SK-N-SH (cell line): ENCODE measurements at regions of chr11 and their contacts with region 1.

Region 1: GRCh38 chr11:120801801-120802689 is 221.9 kb upstream of the TBCEL start:
- DNase-seq: peak; percentile 83
- H3K4me3 ChIP-seq: no peak overlapping the region; a peak in 1 of 4 replicates
- H3K27ac ChIP-seq: no peak overlapping the region
- H3K4me1 ChIP-seq: peaks cover 0 to 18% of the 10 kb centered on the region in 2 experiments; a peak in 1 of 4 replicates
- H3K27me3 ChIP-seq: no peaks in the 10 kb centered on the region
- CTCF ChIP-seq: peak; percentile 80
- EP300 ChIP-seq: no peak
- RAD21 ChIP-seq: peak; percentile 85

Region 2: GRCh38 chr11:120055646-120056045 is 746.4 kb before region 1 on chr11:
- CTCF ChIA-PET with region 1: no interaction called
- POLR2A ChIA-PET with region 1: no interaction called
- DNase-seq: no peak
- H3K4me3 ChIP-seq: no peak overlapping the region
- H3K27ac ChIP-seq: no peak overlapping the region
- H3K4me1 ChIP-seq: peaks cover 0 to 6% of the 10 kb centered on the region in 2 experiments; a peak in 1 of 4 replicates
- H3K27me3 ChIP-seq: no peaks in the 10 kb centered on the region
- CTCF ChIP-seq: no peak
- EP300 ChIP-seq: no peak
- RAD21 ChIP-seq: no peak

Region 3: DNA sequence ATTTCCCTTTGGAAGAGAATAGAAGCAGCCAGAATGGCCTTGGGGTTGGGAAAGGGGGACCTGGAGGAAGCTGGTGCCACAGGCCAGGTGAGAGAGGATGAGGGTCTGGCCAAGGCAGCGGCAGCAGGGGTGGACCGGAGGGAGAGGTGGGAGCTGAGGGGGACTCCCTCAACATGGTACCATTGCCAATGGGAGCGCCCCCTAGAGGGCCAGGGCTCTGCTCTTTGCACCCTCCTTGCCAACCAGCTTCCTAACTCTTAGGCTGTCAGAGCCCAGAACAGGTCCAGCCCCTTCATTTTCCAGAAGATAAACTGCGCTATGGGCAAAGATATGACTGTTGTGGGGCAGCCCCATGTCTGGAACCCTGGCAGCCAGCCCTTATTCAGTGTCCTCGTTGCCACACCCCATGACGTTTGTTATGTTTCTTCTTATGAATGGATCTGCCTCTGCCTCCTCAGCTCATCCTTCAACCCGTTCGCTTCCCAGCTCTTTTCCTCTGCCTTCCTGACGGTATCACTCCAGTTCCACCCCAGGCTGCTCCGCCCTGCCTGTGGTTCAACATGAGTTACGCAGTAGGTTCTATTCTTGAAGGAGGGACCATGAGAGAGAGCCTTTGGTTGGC is 105.3 kb before region 1 on chr11:
- CTCF ChIA-PET with region 1: interaction called, 14 read pairs
- POLR2A ChIA-PET with region 1: no interaction called
- DNase-seq: no peak
- H3K4me3 ChIP-seq: no peak overlapping the region
- H3K27ac ChIP-seq: no peak overlapping the region
- H3K4me1 ChIP-seq: no peaks in the 10 kb centered on the region; a peak in 1 of 4 replicates
- H3K27me3 ChIP-seq: no peaks in the 10 kb centered on the region
- CTCF ChIP-seq: peak; percentile 33; the same call in 1 of the 2 replicates
- EP300 ChIP-seq: no peak
- RAD21 ChIP-seq: no peak

Region 4: DNA sequence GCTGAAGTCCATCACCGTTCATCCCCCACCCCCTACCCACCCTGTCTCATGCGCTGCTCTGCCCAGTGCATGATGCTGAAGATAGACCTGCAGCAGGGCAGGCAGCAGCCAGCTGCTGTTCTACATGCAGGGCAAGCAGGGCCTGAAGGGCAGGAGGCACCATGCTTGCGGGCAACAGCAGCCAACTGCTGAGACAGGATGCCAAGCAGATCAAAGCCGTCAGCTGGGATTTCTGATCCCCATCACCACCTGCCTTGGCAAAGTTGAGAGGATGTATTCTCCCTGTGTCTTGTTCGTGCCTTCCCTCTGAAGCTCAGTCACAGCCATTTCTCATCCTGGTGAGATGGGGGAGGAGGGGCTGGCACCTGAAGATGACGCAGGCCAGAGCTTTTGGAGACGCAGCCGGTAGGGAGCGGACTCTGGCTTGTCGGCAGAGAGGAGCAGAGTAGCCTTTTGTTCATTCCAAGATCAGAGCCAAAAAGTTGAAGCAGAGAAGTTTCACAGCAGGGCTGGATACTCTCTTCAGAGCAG is 63.5 kb before region 1 on chr11:
- CTCF ChIA-PET with region 1: interaction called, 12 read pairs
- POLR2A ChIA-PET with region 1: no interaction called
- DNase-seq: no peak
- H3K4me3 ChIP-seq: no peak overlapping the region
- H3K27ac ChIP-seq: peak overlapping the region in 1 of 2 experiments; percentile 94; a peak in 2 of 4 replicates
- H3K4me1 ChIP-seq: peaks cover 0 to 44% of the 10 kb centered on the region in 2 experiments; a peak in 2 of 4 replicates
- H3K27me3 ChIP-seq: no peaks in the 10 kb centered on the region
- CTCF ChIP-seq: no peak
- EP300 ChIP-seq: no peak
- RAD21 ChIP-seq: no peak

Region 5: GRCh38 chr11:120817158-120817557 is 15.1 kb after region 1 on chr11:
- CTCF ChIA-PET with region 1: interaction called, 23 read pairs
- POLR2A ChIA-PET with region 1: no interaction called
- DNase-seq: peak; percentile 58
- H3K4me3 ChIP-seq: no peak overlapping the region
- H3K27ac ChIP-seq: peak overlapping the region in 1 of 2 experiments; percentile 81; a peak in 2 of 4 replicates
- H3K4me1 ChIP-seq: peaks cover 0 to 55% of the 10 kb centered on the region in 2 experiments; a peak in 1 of 4 replicates
- H3K27me3 ChIP-seq: no peaks in the 10 kb centered on the region; the same call in 1 of the 2 replicates
- CTCF ChIP-seq: no peak
- EP300 ChIP-seq: no peak
- RAD21 ChIP-seq: no peak

Region 6: DNA sequence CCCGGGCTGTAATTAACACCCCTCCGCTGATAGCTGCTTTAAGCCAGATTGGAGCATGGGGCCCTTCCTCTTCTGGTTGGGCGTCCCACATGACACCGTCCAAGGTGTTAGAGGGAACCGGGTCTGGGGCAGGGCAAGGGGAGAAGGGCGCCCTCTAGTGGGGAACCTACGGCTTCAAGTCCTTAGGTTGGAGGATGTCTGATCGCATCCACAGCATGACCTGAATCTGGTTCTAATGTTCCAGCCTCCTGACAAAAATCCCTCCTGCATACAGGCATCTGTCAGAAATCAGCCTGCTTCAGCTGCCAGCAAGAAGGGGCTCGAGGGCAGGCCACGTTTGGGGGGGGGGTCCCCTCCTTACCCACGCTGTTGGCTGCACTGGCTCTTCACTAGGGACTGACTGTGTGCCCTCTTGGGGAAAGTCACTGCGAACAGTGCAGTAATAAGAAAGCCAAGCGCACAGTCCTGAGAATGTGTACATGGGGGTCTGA is 127.7 kb after region 1 on chr11:
- CTCF ChIA-PET with region 1: interaction called, 18 read pairs
- POLR2A ChIA-PET with region 1: no interaction called
- DNase-seq: peak; percentile 72
- H3K4me3 ChIP-seq: no peak overlapping the region
- H3K27ac ChIP-seq: no peak overlapping the region
- H3K4me1 ChIP-seq: peaks cover 0 to 16% of the 10 kb centered on the region in 2 experiments; a peak in 2 of 4 replicates
- H3K27me3 ChIP-seq: no peaks in the 10 kb centered on the region
- CTCF ChIP-seq: peak; percentile 59
- EP300 ChIP-seq: no peak
- RAD21 ChIP-seq: peak; percentile 53